Right ventricle myocardium inferior (tissue), 1 donor: ENCODE measurements at regions of chr1 and their contacts with region 1.

Region 1: DNA sequence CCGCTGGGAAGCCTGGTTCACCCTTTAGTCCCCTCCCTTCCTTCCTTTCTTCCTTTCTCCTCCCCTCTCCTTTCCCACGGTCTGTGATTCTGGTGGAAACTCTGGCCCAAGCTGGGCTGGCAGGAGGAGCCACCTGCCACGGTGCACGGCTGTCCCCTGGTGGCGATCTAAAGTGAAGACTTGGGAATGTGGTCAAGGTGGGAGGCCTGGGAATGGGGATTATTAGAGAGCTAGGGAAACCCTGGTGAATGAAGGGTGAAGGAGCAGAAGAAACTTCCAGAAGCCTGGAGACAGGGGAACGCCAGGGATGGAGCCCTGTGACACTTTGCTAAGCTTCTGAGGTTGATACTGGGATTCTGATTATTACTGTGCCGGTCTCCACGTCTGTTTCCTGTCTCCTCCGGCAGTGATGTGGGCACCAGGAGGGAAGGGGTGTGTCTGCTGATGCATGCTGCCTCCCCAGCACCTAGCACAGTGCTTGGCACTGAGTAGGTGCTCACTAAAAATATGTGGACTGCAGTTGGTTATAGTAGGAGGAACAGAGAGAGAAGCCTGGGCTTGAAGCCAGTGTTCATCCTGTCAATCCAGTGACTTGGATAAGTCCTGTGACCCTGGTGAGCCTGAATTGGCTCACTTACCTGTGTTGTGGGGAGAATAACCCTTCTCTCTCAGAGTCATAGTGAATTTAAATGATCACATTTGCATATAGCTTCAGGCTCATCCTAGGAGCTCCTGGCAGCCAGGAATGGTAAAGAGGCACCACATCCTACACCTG is 71.2 kb upstream of the NBPF3 start:
- DNase-seq: peak; percentile 87
- ATAC-seq: peak; percentile 95

Region 2: DNA sequence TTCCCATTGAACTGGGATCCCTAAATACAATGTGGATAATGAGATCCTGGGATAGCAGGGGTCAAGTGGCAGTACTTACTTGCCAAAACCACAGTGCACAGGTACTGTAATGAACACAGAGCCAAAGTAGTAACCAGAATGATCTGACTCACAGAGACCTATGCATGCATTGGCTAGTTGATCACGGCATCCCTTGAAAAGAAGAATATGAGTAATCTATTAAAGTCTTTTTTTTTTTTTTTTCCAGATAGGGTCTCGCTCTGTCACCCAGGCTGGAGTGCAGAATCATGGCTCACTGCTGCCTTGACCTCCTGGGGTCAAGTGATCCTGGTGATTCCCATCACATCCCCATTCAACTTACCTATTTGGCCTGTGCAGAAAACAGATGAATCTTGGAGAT is 162.6 kb before region 1 on chr1:
- intact Hi-C with region 1: no loop called
- DNase-seq: no peak
- ATAC-seq: no peak

Region 3: DNA sequence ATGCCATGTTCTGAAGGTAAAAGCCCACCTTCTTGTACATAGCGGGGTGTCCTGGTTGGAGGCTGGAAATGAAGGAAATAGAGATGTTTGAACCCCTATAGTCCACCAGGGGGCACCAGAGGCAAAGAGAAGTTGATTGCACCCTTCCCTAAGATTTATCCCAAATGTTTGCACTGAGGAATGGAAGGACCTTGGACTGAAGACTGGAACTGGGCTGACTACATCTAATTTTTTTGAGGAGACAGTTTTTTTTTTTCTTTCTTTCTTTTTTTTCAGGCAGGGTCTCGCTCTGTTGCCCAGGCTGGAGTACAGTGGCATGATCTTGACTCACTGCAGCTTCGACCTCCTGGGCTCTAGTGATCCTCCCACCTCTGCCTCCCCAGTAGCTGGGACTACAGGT is 136.7 kb before region 1 on chr1:
- intact Hi-C with region 1: loop called (anchors 1 kb)
- DNase-seq: no peak
- ATAC-seq: peak; percentile 59

Region 4: DNA sequence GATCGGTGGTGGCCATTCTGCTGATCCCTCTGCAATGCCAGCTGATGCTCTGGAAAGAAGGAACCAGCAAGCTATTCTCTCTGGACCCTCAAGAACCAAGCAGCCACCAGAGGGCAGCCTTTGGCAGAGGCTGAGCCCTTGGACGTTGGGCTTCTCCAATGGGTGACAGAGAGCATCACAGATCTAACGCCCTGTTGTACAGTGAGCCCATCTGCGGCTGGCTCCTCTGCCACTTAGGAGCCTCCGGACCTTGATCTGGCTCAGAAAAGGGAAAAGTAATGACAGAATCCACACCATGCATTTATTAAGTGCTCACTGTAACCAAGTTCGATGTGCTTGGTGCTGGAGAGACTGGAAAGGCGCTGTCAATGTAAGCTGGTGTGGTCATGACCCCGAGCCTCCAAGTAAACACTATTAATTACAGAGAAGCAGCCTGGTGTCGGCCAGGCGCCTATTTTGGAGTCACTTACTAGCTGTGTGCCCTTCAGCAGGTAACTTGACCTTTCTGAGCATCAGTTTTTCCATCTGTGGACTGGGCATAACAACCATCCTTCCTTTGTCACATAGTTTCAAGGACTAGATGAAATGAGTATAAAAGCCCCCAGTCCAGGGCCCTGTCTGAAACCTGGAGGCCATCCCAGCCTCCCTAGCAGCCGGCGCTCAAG is 113.3 kb before region 1 on chr1:
- intact Hi-C with region 1: loop called (anchors 1 kb)
- DNase-seq: peak; percentile 92
- ATAC-seq: peak; percentile 85

Region 5: GRCh38 chr1:21594935-21595897 is 226.5 kb after region 1 on chr1:
- intact Hi-C with region 1: loop called (anchors 2 kb)
- DNase-seq: peak; percentile 92
- ATAC-seq: no peak

Region 6: DNA sequence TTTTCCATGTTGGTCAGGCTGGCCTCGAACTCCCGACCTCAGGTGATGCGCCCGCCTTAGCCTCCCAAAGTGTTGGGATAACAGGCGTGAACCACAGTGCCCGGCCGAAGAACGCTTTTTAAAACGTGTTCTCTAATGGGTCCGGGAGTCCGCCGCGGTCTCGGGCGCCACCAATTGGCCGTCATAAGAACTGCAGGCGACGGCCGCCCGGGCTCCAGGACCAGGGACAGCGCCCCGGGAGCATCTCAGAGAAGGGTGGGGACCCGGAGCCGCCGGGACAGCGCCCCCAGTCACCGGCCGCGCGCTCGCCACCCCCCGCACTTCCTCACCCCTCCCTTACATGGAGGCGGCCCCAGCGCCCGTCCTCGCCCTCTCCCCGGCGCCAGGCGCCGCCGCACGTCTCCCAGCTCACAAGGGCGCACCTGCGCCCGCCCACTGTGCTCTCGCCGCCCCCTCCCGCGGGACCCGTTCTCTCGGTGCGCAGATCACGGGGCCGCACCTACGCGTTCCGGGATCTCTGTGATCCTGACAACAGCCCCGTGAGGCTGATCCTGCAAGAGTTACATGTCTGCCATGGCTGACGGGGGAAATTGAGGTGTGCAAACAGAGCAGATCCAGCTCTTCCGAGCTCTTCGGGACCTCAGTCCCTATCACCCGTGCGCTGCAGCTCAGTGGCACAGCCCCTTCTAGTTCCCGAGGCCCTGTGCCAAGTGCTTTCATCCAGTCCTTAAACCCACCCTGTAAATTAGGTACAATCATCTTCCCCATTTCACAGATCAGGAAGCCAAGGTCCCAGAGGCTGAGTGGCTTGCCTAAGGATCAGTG is 290.6 kb after region 1 on chr1:
- intact Hi-C with region 1: loop called (anchors 5 kb)
- DNase-seq: peak; percentile 94
- ATAC-seq: peak; percentile 73

Region 7: DNA sequence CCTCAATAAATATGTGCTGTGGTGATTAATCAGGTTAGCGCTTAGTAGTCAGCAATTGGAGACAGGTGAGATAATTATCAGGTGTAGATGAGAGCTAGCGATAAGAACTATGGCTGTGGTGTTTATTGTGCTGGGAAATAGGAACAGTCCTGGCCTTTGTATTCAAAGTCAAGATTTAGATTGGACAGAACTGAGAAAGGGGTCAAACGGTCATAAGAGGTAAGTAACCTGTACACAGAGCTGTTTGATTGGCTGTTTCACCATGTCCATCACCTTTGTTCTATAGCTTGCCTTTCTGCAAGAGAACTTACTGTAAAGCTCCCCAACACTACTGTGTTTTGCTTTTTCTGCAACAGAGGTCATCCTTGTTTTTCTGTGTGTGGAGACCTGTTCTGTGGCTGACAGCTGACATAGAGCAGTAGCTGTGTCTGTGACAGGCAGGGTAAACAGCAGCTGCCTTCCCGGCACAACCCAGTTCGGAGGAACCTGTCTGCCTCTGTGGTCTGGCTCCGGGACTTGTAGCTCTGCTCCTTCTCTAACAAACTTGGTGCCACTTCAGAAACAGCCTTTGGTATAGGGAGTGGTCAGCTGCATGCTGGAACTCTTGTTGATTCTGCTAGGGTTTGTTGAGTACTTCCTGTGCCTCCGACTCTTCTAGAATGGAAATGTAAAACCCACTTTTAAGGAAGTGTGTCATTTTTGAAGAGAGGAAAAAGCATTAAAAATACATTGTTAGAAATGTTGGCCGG is 662.7 kb after region 1 on chr1:
- intact Hi-C with region 1: no loop called
- DNase-seq: no peak
- ATAC-seq: peak; percentile 82